ENCODE measurements at regions of chr15 and their contacts with region 1.

Region 1: DNA sequence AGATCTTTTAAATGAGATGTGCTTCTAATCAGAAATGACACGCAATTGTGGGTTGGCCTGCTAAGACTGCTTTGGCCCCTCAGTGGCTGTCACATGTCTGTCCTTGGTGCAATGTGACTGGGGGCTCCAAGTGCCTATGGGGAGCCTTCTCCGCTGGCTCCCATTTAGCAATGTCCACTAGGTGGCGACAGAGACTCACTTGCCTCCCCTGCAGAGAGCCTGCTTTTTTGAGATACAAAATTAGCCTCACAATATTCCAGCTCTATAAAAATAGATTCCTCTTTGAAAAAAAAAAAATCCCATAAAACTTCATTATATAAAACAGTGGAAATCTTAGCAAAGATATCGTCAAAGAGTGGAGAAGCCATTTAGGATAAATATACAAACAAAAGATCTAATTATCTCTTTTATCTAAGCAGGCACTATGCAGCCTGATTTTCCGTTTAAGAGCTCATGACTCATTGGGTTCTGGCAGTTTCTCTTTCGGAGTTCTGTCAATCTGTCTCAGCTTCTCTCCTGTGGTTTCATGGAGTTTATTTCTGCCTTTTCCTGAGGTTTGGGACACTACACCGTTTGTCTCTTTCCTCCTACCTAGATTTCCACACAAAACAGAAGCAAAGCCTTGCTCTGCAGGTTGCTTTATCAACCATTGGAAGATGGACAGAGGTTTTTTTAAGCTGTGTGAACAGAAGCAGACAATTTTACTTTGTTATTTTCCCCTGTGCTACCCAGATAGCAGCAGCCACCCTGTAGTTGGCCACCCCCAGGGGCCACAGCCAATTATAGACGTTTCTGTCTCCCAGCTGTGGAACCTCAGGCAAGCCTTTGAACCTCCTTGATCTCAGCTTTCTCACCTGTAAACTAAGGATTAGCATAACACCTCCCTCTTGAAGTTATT is 68.4 kb upstream of the TNFAIP8L3 start:
- DNase-seq: peak; percentile 52 to 96 (median 82)

Region 2: DNA sequence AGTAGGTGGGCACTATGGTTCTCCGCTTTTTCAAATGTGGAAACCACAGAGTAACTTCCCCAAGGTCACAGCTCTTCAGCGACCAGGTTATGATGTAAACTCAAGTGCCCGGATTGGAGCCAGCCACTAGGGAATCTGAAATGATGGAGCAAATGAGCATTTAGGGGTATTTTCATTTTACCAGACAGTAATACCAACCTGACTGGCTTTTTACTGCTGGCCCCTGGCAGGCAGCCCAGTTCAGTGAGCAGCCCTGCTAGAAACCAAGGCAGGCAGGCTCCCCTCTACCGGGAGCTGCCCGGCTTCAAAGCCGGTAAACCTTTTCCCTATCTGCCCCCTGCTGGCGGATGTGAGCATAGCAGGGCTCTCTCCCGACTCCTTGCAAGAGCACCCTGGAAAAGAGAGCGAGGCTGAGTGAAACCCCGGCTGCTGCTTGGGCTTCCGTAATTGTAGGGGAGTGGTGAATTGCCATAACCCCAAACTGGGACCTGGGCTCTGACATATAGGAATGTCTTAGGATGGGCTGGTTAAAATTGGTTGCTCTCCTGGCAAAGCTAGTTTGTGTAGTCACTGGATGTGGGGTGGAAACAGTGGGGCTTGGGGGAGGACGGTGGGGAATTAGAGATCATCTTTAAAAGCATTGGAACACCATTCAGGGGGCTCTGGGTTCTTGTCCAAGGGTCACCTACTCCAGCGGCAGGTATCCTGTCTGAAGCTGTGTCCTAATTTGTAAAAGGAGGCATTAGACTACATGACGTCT is 29.6 kb after region 1 on chr15:
- intact Hi-C with region 1: loop called (anchors 1 kb)
- DNase-seq: peak; percentile 82 to 99 (median 96)

Region 3: DNA sequence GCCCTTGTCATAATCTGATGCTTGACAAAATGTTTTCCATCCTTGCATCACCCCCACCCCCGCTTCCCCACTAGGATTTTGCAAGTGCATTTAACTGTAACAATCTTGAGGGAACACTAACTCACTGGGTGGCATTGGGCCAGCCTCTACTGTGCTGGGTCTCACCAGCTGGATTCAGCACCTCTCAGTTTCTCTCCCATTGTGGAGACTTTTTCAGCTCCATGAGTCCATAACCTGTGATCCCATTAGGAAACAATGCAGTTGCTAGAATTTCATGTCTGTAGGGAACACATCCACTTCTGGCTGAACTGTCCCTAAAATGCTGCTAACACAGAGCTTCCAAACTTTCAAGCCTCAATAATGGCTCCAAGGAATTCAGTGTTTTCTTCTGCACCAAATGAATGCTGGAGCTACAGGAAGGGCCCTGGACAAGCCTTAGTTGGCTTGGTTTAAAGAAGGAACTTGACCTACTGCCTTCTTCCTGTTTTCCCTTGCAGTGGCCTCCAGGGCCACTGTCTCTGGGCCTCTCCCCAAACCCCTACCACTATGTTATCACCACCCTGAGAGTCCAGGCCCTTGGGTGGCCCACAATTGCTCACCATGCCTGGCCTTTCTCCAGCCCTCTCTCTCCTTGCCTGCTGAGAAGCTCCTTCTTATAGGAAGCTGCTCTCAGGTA is 159.6 kb after region 1 on chr15:
- intact Hi-C with region 1: no loop called
- DNase-seq: no peak

Region 4: GRCh38 chr15:51401872-51402517 is 238.9 kb after region 1 on chr15:
- intact Hi-C with region 1: loop called (anchors 5 kb)
- DNase-seq: peak in 8 of 10 donors; percentile 41 to 93 (median 58)